Caco-2 (cell line): ENCODE measurements at regions of chr10 and their contacts with region 1.

Region 1: DNA sequence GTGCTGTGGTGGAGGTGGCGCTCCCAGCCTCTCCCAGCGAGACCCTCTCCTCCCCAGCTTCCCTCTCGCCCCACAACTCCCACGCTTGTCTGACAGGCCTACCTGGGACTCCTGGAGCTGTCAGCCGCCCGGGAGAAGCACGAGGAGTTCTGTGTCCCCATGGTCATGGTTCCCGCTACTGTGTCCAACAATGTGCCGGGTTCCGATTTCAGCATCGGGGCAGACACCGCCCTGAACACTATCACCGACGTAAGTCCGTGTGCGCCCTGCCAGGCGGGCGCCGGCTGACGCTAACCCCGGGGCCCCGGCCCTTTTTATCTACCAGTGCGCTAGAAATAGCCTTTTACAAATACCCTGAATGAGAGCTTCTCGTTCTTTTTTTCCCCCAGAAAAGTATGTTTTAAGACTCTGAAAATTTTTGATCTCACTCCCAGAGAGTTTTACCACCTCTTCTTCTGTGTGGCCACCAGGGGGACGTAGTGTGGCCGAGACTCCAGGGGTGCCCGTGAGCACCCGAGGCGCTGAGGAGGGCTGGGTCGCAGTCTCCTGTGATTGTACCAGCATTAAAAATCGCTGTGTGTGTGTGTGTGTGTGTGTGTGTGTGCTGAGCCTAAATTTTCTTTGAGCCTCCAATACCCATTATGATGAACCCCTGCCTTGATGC is 52.6 kb downstream of the PFKP start:
- DNase-seq: peak in 1 of 2 experiments; percentile 59
- H3K4me3 ChIP-seq: no peak overlapping the region
- H3K4me3 Mint-ChIP-seq: no peak overlapping the region
- H3K27ac Mint-ChIP-seq: no peak overlapping the region
- H3K4me1 ChIP-seq: no peaks in the 10 kb centered on the region
- H3K4me1 Mint-ChIP-seq: no peaks in the 10 kb centered on the region
- H3K27me3 ChIP-seq: no peaks in the 10 kb centered on the region
- H3K27me3 Mint-ChIP-seq: no peaks in the 10 kb centered on the region
- CTCF ChIP-seq: peak; percentile 65 to 72

Region 2: DNA sequence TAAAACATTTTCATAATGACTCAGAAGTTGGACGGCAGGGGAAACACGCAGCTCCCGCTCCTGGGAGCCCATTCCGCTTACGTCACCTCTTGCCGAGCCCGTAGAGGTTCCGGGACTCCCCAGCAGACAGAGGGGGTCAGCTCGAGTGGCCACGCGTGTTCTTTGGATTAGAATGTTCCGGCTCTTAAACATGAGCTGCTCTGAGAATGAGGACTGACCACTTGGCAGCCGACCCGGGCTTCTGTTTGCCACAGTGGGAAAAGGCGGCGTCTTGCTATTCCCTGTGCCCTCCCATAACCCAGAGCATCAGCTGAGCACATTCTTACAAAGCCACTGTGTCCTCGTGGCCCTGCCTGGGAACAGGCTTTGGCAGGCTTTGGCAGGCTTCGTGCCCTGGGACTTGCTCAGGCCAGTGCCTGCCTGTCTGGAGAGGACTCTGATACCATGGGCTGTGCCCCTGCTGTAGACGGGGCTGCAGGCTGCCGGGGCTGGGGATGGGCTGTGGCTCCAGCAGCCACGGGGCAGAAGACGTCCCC is 12.4 kb before region 1 on chr10:
- CTCF ChIA-PET with region 1: no interaction called
- POLR2A ChIA-PET with region 1: no interaction called
- intact Hi-C with region 1: no loop called
- DNase-seq: no peak
- H3K4me3 ChIP-seq: no peak overlapping the region
- H3K4me3 Mint-ChIP-seq: no peak overlapping the region
- H3K27ac Mint-ChIP-seq: no peak overlapping the region
- H3K4me1 ChIP-seq: no peaks in the 10 kb centered on the region
- H3K4me1 Mint-ChIP-seq: no peaks in the 10 kb centered on the region
- H3K27me3 ChIP-seq: no peaks in the 10 kb centered on the region
- H3K27me3 Mint-ChIP-seq: no peaks in the 10 kb centered on the region
- CTCF ChIP-seq: no peak

Region 3: GRCh38 chr10:3131094-3131493 is 11.2 kb after region 1 on chr10:
- CTCF ChIA-PET with region 1: no interaction called
- POLR2A ChIA-PET with region 1: no interaction called
- intact Hi-C with region 1: loop called (anchors 1 kb)
- DNase-seq: peak; percentile 72 to 79
- H3K4me3 ChIP-seq: no peak overlapping the region
- H3K4me3 Mint-ChIP-seq: no peak overlapping the region
- H3K27ac Mint-ChIP-seq: peak overlapping the region; percentile 75
- H3K4me1 ChIP-seq: peaks cover 12% of the 10 kb centered on the region
- H3K4me1 Mint-ChIP-seq: peaks cover 6% of the 10 kb centered on the region
- H3K27me3 ChIP-seq: no peaks in the 10 kb centered on the region
- H3K27me3 Mint-ChIP-seq: no peaks in the 10 kb centered on the region
- CTCF ChIP-seq: no peak

Region 4: DNA sequence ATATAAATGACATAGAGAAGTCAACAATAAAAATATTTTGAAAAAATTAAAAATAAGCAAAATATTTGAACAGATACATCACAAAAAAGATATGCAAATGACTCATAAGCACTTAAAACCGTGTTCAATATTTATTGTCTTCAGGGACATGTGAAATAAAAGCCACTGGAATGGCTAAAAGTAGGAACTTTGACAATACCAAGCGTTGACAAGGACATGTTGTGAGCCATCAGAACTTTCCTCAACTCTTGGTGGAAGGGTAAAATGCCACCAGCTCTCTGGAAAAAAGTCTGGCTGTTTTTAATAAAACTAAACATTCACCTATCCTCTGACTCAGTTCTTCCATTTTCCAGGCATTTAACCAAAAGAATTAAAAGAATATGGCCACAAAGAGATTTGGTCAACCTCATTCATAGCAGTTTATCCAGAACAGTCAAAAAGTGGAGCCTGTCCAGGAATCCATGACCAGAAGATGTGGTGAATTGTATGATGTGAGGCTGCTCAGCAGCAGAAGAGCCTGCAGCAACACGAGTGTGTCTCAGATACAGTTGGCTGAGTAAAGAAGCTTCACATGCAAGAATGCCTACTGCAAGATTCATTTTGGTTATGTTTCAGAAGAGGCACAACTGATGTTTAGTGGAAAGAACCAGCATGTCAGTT is 672.2 kb after region 1 on chr10:
- CTCF ChIA-PET with region 1: no interaction called
- POLR2A ChIA-PET with region 1: no interaction called
- intact Hi-C with region 1: no loop called
- DNase-seq: no peak
- H3K4me3 ChIP-seq: no peak overlapping the region
- H3K4me3 Mint-ChIP-seq: no peak overlapping the region
- H3K27ac Mint-ChIP-seq: no peak overlapping the region
- H3K4me1 ChIP-seq: peaks cover 7% of the 10 kb centered on the region; the same call in 1 of the 2 replicates
- H3K4me1 Mint-ChIP-seq: peaks cover 13% of the 10 kb centered on the region
- H3K27me3 ChIP-seq: no peaks in the 10 kb centered on the region
- H3K27me3 Mint-ChIP-seq: no peaks in the 10 kb centered on the region
- CTCF ChIP-seq: no peak